ENCODE measurements at regions of chr7 and their contacts with region 1.

Region 1: GRCh38 chr7:129163875-129164544 is 19.5 kb downstream of the TSPAN33 start:
- DNase-seq: no peak
- ATAC-seq: peak; percentile 51
- H3K4me3 Mint-ChIP-seq: no peak overlapping the region
- H3K27ac Mint-ChIP-seq: no peak overlapping the region
- H3K4me1 Mint-ChIP-seq: peaks cover 3% of the 10 kb centered on the region
- H3K27me3 Mint-ChIP-seq: no peaks in the 10 kb centered on the region

Region 2: DNA sequence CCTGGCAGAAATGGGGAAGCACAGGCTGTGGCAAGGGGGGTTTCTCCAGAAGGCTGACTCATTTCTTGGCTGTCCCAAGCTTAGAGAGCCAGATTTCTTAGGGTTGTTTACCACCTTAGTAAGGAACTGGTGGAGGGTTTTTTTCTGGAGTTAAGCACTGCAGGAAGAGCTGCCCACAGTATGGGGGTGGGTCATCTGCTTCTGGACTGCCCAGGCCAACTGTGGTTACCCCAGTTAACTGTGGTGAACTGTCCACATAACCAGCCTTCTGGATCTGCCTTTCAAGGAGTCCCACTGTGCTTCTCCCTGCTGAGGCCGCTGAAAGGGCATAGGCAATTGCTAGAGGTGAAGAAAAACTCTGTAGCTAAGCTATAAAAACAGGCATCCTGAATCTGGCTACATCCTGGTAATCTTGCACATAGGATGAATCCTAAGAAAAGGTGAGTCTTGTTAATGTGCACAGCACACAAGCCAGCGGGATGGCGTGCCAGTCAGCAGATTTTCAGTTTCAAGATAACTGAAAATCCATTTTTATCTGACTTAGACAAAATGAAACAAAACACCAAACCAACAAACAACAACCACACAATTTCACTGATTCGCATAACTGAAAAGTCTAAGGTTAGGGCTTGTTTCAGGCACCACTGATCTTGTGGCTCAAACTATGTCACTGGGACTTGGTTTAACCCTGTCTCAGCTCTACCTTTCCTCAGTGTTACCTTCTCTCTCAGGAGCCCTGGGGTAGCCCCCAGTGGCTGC is 41.1 kb before region 1 on chr7:
- CTCF ChIA-PET with region 1: interaction called, 10 read pairs
- DNase-seq: peak; percentile 62
- ATAC-seq: peak; percentile 82
- H3K4me3 Mint-ChIP-seq: peak overlapping the region; percentile 55
- H3K27ac Mint-ChIP-seq: peak overlapping the region; percentile 79
- H3K4me1 Mint-ChIP-seq: peaks cover 24% of the 10 kb centered on the region
- H3K27me3 Mint-ChIP-seq: peaks cover 24% of the 10 kb centered on the region

Region 3: GRCh38 chr7:129144095-129144833 is 19.7 kb before region 1 on chr7 and contains the start of gene TSPAN33:
- CTCF ChIA-PET with region 1: interaction called, 36 read pairs
- DNase-seq: peak; percentile 76
- ATAC-seq: peak; percentile 99
- H3K4me3 Mint-ChIP-seq: peak within 1 kb of the TSS; percentile 84
- H3K27ac Mint-ChIP-seq: no peak within 1 kb of the TSS
- H3K4me1 Mint-ChIP-seq: peaks cover 20% of the 10 kb centered on the region
- H3K27me3 Mint-ChIP-seq: peaks cover 37% of the 10 kb centered on the region
- total RNA-seq, gene TSPAN33: 6.1 to 15.2 TPM

Region 4: GRCh38 chr7:129150199-129150996 is 13.6 kb before region 1 on chr7:
- CTCF ChIA-PET with region 1: interaction called, 36 read pairs
- DNase-seq: no peak
- ATAC-seq: no peak
- H3K4me3 Mint-ChIP-seq: no peak overlapping the region
- H3K27ac Mint-ChIP-seq: no peak overlapping the region
- H3K4me1 Mint-ChIP-seq: peaks cover 7% of the 10 kb centered on the region
- H3K27me3 Mint-ChIP-seq: peaks cover 12% of the 10 kb centered on the region

Region 5: DNA sequence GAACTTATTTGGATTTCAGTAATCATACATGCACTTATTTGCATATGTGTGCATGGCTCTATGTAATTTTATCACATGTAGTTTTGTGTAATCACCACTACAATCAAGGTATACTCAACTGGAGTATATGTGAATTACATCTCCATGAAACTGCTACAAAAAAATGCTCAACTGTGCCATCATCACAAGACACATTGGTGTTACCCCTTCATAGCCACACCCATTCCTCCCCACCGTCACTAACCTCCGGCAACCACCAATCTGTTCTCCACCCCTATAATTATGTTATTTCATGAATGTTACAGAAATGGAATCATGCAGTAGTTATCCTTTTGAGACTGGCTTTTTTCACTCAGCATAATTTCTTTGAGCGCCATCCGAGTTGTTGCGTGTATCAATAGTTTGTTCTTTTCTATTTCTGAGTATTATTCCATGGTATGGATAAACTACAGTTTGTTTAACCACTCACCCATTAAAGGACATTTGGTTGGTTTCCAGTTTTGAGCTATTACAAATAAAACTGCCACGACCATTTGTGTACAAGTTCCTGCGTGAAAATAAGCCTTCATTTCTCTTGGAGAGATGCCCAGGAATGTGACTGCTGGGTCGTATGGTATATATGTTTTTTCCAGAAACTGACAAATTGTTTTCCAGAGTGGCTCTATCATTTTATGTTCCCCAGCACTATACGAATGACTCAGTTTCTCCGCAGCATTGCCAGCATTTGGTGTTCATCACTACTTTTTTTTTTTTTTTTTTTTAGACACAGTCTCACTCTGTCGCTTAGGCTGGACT is 13.1 kb after region 1 on chr7:
- CTCF ChIA-PET with region 1: interaction called, 13 read pairs
- DNase-seq: no peak
- ATAC-seq: no peak
- H3K4me3 Mint-ChIP-seq: no peak overlapping the region
- H3K27ac Mint-ChIP-seq: no peak overlapping the region
- H3K4me1 Mint-ChIP-seq: no peaks in the 10 kb centered on the region
- H3K27me3 Mint-ChIP-seq: peaks cover 55% of the 10 kb centered on the region

Region 6: GRCh38 chr7:129193892-129194291 is 29.9 kb after region 1 on chr7:
- CTCF ChIA-PET with region 1: interaction called, 11 read pairs
- DNase-seq: no peak
- ATAC-seq: no peak
- H3K4me3 Mint-ChIP-seq: no peak overlapping the region
- H3K27ac Mint-ChIP-seq: no peak overlapping the region
- H3K4me1 Mint-ChIP-seq: peaks cover 4% of the 10 kb centered on the region
- H3K27me3 Mint-ChIP-seq: peaks cover 43% of the 10 kb centered on the region

Region 7: DNA sequence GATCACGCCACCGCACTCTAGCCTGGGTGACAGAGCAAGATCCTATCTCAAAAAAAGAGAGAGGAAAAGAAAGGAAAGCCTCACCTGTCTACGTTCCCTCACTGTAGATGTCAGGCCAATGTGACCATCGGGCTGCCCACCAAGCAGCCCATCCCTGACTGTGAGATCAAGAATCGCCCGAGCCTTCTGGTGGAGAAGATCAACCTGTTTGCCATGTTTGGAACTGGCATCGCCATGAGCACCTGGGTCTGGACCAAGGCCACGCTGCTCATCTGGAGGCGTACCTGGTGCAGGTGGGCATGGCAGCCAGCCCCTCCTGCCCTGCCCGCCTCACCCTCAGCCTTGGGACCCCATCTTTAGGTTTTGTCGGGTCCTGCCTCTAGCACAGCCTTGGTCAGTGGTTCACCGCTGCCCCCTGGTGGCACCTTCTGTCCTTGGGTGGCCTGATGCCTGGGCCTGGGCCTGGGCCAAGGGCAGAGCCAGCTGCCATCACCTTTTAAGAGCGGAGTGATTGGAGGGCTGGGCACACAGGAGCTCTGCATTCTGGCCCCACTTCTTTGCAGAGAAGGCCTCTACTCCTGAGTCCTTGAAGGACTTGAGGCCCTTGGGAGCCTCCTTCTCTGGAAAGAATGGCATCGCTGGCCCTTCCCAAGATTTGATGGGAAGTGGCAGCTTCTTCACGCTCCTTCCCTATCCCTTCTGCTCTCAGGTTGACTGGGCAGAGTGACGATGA is 46.4 kb after region 1 on chr7:
- CTCF ChIA-PET with region 1: interaction called, 22 read pairs
- DNase-seq: peak; percentile 80
- ATAC-seq: peak; percentile 91
- H3K4me3 Mint-ChIP-seq: no peak overlapping the region
- H3K27ac Mint-ChIP-seq: no peak overlapping the region
- H3K4me1 Mint-ChIP-seq: no peaks in the 10 kb centered on the region
- H3K27me3 Mint-ChIP-seq: peaks cover 11% of the 10 kb centered on the region

Region 8: GRCh38 chr7:129652914-129653313 is 488.9 kb after region 1 on chr7:
- CTCF ChIA-PET with region 1: no interaction called
- DNase-seq: no peak
- ATAC-seq: no peak
- H3K4me3 Mint-ChIP-seq: no peak overlapping the region
- H3K27ac Mint-ChIP-seq: no peak overlapping the region
- H3K4me1 Mint-ChIP-seq: peaks cover 17% of the 10 kb centered on the region
- H3K27me3 Mint-ChIP-seq: no peaks in the 10 kb centered on the region

Measured in activated CD8-positive, alpha-beta memory T cell treated with anti-CD3 and anti-CD28 coated beads, Interleukin-2, amount 10 ng/mL, durations not matched to agents 7 days and 5 days (primary cell).